ENCODE measurements at regions of chr1 and their contacts with region 1.

Region 1: GRCh38 chr1:33295450-33296081 is 25.3 kb downstream of the A3GALT2 start:
- DNase-seq: peak; percentile 59 to 93 (median 80)
- ATAC-seq: peak; percentile 82 to 95 (median 90)
- H3K4me3 ChIP-seq: no peak overlapping the region
- H3K4me3 Mint-ChIP-seq: no peak overlapping the region
- H3K27ac ChIP-seq: no peak overlapping the region
- H3K27ac Mint-ChIP-seq: peak overlapping the region; percentile 28 to 31
- H3K4me1 ChIP-seq: peaks cover 0 to 14% of the 10 kb centered on the region in 2 experiments
- H3K4me1 Mint-ChIP-seq: peaks cover 8 to 17% (median 8%) of the 10 kb centered on the region in 3 donors
- H3K27me3 ChIP-seq: no peaks in the 10 kb centered on the region
- H3K27me3 Mint-ChIP-seq: no peaks in the 10 kb centered on the region

Region 2: GRCh38 chr1:32876341-32877210 is 419.0 kb before region 1 on chr1:
- CTCF ChIA-PET with region 1: no interaction called
- POLR2A ChIA-PET with region 1: no interaction called
- DNase-seq: peak in 32 of 35 experiments; percentile 20 to 74 (median 49)
- ATAC-seq: peak; percentile 57 to 89 (median 72)
- H3K4me3 ChIP-seq: no peak overlapping the region
- H3K4me3 Mint-ChIP-seq: no peak overlapping the region
- H3K27ac ChIP-seq: no peak overlapping the region
- H3K27ac Mint-ChIP-seq: no peak overlapping the region
- H3K4me1 ChIP-seq: peaks cover 0 to 19% of the 10 kb centered on the region in 2 experiments
- H3K4me1 Mint-ChIP-seq: peaks cover 1 to 8% (median 3%) of the 10 kb centered on the region in 3 donors
- H3K27me3 ChIP-seq: peaks cover 4 to 69% of the 10 kb centered on the region in 2 experiments
- H3K27me3 Mint-ChIP-seq: peaks cover 44 to 58% of the 10 kb centered on the region in 2 donors

Region 3: DNA sequence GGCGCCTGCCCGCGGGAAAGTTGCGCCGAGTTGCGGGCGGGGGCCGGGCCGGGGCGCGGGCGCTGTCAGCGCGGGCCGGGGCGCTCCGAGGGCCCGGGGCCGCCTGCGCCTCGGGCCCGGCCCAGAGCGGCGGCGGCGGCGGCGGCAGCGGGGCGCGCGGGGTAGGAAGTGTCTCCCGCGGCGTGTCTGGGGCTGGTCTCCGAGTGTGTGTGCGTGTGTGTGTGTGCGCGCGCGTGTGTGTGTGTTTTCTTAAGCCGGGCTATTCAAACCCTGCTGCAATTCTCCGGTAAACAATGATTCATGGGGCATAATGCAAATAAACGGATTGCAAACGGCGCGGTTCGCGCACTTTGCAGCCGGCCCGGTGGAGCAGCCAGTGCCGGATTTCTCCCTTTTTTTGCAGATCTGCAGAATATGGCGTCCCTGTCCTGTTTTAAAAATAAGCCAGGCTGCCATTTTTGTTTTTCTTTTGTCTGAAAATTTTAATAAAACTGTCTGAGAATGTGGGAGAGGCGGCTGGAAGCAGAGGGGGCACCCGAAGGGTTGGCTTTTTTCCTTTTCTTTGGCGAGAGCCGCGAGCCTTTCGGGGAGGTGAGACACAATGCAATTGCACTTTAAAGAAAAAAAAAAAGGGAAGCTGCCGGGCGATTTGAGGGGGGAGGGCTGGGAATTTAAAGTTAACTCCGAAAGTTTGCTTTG is 38.7 kb before region 1 on chr1:
- CTCF ChIA-PET with region 1: no interaction called
- POLR2A ChIA-PET with region 1: no interaction called
- DNase-seq: peak in 34 of 35 experiments; percentile 15 to 70 (median 34)
- ATAC-seq: peak; percentile 77 to 79 (median 78)
- H3K4me3 ChIP-seq: peak overlapping the region; percentile 81 to 93
- H3K4me3 Mint-ChIP-seq: peak overlapping the region; percentile 96 to 98 (median 97)
- H3K27ac ChIP-seq: peak overlapping the region; percentile 59
- H3K27ac Mint-ChIP-seq: peak overlapping the region; percentile 94 to 97
- H3K4me1 ChIP-seq: peaks cover 9 to 34% of the 10 kb centered on the region in 2 experiments
- H3K4me1 Mint-ChIP-seq: peaks cover 39 to 43% (median 41%) of the 10 kb centered on the region in 3 donors
- H3K27me3 ChIP-seq: no peaks in the 10 kb centered on the region
- H3K27me3 Mint-ChIP-seq: no peaks in the 10 kb centered on the region

Region 4: DNA sequence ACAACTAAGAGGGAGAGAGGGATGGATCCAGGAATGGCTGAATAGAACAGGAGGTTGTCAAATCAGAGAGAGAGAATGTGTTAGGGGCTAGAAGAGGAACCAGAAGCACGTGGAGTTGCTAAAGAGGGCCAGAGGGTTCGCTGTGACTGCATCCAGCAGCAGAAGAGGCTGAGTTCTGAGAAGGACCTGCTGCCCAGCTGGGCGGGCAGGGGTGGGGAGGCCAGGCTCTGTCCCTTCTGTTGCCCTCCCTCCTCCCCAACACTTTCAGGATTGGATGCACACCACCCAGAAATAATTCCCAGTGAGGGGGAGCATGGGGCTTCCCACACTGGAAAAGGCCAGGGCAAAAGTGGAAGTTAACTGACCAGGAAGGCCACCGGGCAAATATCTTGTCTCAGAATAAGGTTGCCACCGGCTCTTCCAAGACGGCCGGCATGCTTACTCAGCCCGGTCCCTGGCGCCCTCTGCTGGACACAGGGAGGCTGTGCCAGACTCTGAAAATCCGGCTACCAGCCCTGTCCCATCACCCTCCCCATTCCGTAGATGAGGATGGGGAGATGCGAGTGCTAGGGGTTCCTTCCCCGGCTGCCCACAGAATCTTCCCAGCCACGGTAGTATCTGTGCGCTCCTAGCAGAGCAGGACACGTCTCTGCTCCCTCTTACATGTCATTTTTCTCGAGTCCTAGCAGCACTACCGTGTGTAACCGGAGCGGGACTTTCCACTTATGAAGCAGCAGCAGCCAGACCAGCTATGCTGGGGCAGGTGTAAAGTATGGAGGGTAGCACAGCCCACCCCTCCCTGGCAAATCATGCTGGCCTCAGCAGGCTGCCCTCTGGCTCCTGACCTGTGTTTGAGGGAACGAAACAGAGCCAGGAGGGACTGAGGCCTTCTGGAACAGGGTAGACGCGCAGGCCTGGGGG is 72.2 kb after region 1 on chr1:
- CTCF ChIA-PET with region 1: interaction called, 7 to 12 read pairs
- POLR2A ChIA-PET with region 1: no interaction called
- DNase-seq: peak; percentile 59 to 90 (median 80)
- ATAC-seq: peak; percentile 91 to 96 (median 92)
- H3K4me3 ChIP-seq: no peak overlapping the region
- H3K4me3 Mint-ChIP-seq: no peak overlapping the region
- H3K27ac ChIP-seq: no peak overlapping the region
- H3K27ac Mint-ChIP-seq: no peak overlapping the region
- H3K4me1 ChIP-seq: peaks cover 0 to 8% of the 10 kb centered on the region in 2 experiments
- H3K4me1 Mint-ChIP-seq: peaks cover 1 to 4% (median 4%) of the 10 kb centered on the region in 3 donors
- H3K27me3 ChIP-seq: peaks cover 0 to 23% of the 10 kb centered on the region in 2 experiments
- H3K27me3 Mint-ChIP-seq: peaks cover 0 to 2% of the 10 kb centered on the region in 2 donors

Region 5: DNA sequence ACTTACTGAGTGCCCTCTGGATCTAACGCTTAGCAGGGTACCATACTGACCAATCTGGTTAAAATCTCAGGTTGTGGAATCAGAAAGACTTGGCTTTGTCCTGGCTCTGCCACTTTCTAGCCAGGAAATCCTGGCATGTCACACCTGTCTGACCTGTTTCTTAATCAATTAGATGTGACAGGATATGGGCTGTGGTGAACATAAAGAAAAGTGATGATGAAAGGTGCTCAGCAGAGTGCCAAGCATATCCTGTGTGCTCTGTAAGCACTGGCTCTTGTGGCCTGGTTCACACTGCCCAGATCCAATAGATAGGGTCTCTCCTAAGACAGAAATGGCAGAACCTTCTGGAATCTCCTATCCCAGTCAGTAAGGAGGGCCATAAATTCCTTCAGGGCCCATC is 81.4 kb after region 1 on chr1:
- CTCF ChIA-PET with region 1: interaction called in 1 of 2 experiments, 12 read pairs
- POLR2A ChIA-PET with region 1: no interaction called
- DNase-seq: peak in 1 of 35 experiments; percentile 21
- ATAC-seq: peak; percentile 72 to 84 (median 80)
- H3K4me3 ChIP-seq: no peak overlapping the region
- H3K4me3 Mint-ChIP-seq: no peak overlapping the region
- H3K27ac ChIP-seq: no peak overlapping the region
- H3K27ac Mint-ChIP-seq: peak overlapping the region in 1 of 2 donors; percentile 85
- H3K4me1 ChIP-seq: peaks cover 0 to 11% of the 10 kb centered on the region in 2 experiments
- H3K4me1 Mint-ChIP-seq: peaks cover 13 to 50% (median 17%) of the 10 kb centered on the region in 3 donors
- H3K27me3 ChIP-seq: peaks cover 0 to 7% of the 10 kb centered on the region in 2 experiments
- H3K27me3 Mint-ChIP-seq: peaks cover 2 to 11% of the 10 kb centered on the region in 2 donors

Region 6: DNA sequence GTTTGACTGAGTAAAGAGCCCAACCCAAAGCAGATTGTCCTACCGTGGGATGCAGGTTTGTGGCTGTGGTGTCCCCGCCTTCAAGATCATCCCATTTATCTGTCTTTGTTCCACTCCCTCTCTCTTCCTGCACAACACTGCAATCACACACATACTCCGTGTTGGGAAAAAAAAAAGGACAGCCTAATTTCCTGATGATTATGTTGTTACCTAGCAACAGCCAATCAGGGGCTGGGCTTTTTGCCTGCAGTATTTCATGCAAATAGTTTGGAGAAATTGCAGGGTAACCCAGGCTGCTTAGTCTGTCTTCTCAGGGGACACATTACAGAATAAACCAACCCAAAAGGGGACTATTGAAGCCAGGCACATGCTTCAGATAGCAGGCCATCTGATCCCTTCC is 97.1 kb after region 1 on chr1:
- CTCF ChIA-PET with region 1: no interaction called
- POLR2A ChIA-PET with region 1: no interaction called
- DNase-seq: no peak
- ATAC-seq: no peak
- H3K4me3 ChIP-seq: no peak overlapping the region
- H3K4me3 Mint-ChIP-seq: no peak overlapping the region
- H3K27ac ChIP-seq: no peak overlapping the region
- H3K27ac Mint-ChIP-seq: no peak overlapping the region
- H3K4me1 ChIP-seq: peaks cover 0 to 7% of the 10 kb centered on the region in 2 experiments
- H3K4me1 Mint-ChIP-seq: peaks cover 3 to 7% (median 6%) of the 10 kb centered on the region in 3 donors
- H3K27me3 ChIP-seq: peaks cover 0 to 4% of the 10 kb centered on the region in 2 experiments
- H3K27me3 Mint-ChIP-seq: peaks cover 9 to 11% of the 10 kb centered on the region in 2 donors

Region 7: GRCh38 chr1:34009340-34009985 is 713.9 kb after region 1 on chr1:
- CTCF ChIA-PET with region 1: no interaction called
- POLR2A ChIA-PET with region 1: no interaction called
- DNase-seq: no peak
- ATAC-seq: no peak
- H3K4me3 ChIP-seq: no peak overlapping the region
- H3K4me3 Mint-ChIP-seq: no peak overlapping the region
- H3K27ac ChIP-seq: no peak overlapping the region
- H3K27ac Mint-ChIP-seq: no peak overlapping the region
- H3K4me1 ChIP-seq: no peaks in the 10 kb centered on the region
- H3K4me1 Mint-ChIP-seq: no peaks in the 10 kb centered on the region
- H3K27me3 ChIP-seq: peaks cover 0 to 14% of the 10 kb centered on the region in 2 experiments
- H3K27me3 Mint-ChIP-seq: peaks cover 5 to 12% of the 10 kb centered on the region in 2 donors

Measured in T-cell (primary cell).